Caco-2 (cell line): ENCODE measurements at regions of chr10 and their contacts with region 1.

Region 1: DNA sequence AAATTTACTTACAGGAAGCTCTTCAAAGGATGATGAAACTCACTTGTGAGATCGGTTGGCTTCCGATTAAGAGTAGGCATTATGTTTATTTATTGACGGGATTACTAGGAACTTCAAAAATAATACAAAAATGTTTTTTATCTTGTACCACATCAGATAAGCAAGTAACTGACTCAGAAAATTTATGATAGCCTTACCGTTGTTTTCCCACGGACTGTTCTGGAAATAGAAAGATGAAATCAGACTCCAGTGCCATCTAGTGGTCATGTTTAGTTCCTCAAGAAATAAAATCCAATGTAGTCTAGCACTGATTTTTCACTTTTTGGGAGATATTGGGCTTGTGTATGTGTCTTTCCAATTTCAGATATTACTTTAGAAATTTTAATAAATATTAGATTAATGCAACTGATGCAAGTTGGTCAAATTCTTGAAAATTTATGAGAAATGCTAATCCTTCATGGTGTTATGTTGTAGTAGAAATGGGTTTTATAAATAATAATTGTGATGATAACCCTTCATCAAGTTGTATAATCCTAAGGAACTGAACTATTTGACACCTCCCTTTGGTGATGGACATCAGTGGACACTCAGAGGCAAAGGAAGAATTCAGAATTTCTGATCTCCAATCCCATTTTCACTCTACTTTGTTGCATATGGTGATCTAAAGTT is 168.8 kb downstream of the TMEM26 start:
- DNase-seq: peak in 1 of 2 experiments; percentile 73
- H3K4me3 ChIP-seq: no peak overlapping the region
- H3K4me3 Mint-ChIP-seq: no peak overlapping the region
- H3K27ac Mint-ChIP-seq: no peak overlapping the region
- H3K4me1 ChIP-seq: peaks cover 5% of the 10 kb centered on the region; the same call in 1 of the 2 replicates
- H3K4me1 Mint-ChIP-seq: peaks cover 8% of the 10 kb centered on the region
- H3K27me3 ChIP-seq: no peaks in the 10 kb centered on the region
- H3K27me3 Mint-ChIP-seq: peaks cover 2% of the 10 kb centered on the region
- CTCF ChIP-seq: peak; percentile 84

Region 2: GRCh38 chr10:60883187-60883586 is 401.2 kb before region 1 on chr10:
- CTCF ChIA-PET with region 1: no interaction called
- POLR2A ChIA-PET with region 1: no interaction called
- intact Hi-C with region 1: loop called (anchors 1 kb)
- DNase-seq: peak; percentile 54 to 64
- H3K4me3 ChIP-seq: no peak overlapping the region
- H3K4me3 Mint-ChIP-seq: no peak overlapping the region
- H3K27ac Mint-ChIP-seq: no peak overlapping the region
- H3K4me1 ChIP-seq: no peaks in the 10 kb centered on the region
- H3K4me1 Mint-ChIP-seq: no peaks in the 10 kb centered on the region
- H3K27me3 ChIP-seq: no peaks in the 10 kb centered on the region
- H3K27me3 Mint-ChIP-seq: no peaks in the 10 kb centered on the region
- CTCF ChIP-seq: peak; percentile 72 to 88

Region 3: DNA sequence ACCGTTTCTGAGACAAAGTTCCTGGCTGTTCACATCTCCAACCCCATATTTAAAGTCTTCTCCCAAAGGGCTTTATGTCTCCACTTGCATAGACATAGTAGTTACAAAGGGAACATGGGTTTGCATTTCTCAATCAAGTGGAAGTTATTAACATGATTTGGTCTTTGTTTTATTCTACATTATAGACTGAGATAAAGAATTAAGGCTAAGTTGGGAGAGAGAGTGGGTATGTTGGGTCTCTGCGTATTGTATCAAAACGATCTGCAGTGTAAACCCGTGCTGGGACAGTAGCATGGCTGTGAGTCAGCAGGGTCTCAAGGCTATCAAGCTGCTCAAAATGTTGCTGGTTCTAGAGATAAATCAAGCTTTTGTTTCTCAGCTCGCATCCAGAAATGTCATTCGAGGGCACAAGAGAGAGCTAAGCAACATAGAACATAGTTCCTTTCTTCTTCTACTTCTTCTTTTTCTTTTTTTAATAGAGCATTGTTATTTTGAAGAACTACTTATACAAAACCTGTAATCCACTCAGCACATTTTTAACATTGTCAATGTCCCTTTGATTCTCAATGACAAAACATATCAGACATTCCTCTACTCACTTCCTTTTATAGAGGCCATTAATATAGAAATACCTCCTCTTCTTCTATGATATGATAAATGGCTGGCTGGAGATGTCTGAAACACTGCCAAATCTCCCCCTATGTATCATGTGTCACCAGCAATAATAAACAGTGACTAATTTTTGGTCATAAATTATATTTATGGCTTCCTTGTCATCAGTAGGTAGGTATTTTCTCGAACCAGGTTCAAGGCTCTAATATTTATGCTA is 305.9 kb before region 1 on chr10:
- CTCF ChIA-PET with region 1: no interaction called
- POLR2A ChIA-PET with region 1: no interaction called
- intact Hi-C with region 1: loop called (anchors 5 kb)
- DNase-seq: no peak
- H3K4me3 ChIP-seq: no peak overlapping the region
- H3K4me3 Mint-ChIP-seq: no peak overlapping the region
- H3K27ac Mint-ChIP-seq: no peak overlapping the region
- H3K4me1 ChIP-seq: peaks cover 14% of the 10 kb centered on the region
- H3K4me1 Mint-ChIP-seq: peaks cover 7% of the 10 kb centered on the region
- H3K27me3 ChIP-seq: no peaks in the 10 kb centered on the region
- H3K27me3 Mint-ChIP-seq: no peaks in the 10 kb centered on the region
- CTCF ChIP-seq: no peak

Region 4: GRCh38 chr10:61140765-61141392 is 143.5 kb before region 1 on chr10:
- CTCF ChIA-PET with region 1: interaction called, 3 read pairs
- POLR2A ChIA-PET with region 1: no interaction called
- intact Hi-C with region 1: loop called (anchors 1 kb)
- DNase-seq: peak in 1 of 2 experiments; percentile 64
- H3K4me3 ChIP-seq: no peak overlapping the region
- H3K4me3 Mint-ChIP-seq: no peak overlapping the region
- H3K27ac Mint-ChIP-seq: no peak overlapping the region
- H3K4me1 ChIP-seq: no peaks in the 10 kb centered on the region
- H3K4me1 Mint-ChIP-seq: no peaks in the 10 kb centered on the region
- H3K27me3 ChIP-seq: no peaks in the 10 kb centered on the region
- H3K27me3 Mint-ChIP-seq: peaks cover 15% of the 10 kb centered on the region
- CTCF ChIP-seq: peak; percentile 80 to 92

Region 5: DNA sequence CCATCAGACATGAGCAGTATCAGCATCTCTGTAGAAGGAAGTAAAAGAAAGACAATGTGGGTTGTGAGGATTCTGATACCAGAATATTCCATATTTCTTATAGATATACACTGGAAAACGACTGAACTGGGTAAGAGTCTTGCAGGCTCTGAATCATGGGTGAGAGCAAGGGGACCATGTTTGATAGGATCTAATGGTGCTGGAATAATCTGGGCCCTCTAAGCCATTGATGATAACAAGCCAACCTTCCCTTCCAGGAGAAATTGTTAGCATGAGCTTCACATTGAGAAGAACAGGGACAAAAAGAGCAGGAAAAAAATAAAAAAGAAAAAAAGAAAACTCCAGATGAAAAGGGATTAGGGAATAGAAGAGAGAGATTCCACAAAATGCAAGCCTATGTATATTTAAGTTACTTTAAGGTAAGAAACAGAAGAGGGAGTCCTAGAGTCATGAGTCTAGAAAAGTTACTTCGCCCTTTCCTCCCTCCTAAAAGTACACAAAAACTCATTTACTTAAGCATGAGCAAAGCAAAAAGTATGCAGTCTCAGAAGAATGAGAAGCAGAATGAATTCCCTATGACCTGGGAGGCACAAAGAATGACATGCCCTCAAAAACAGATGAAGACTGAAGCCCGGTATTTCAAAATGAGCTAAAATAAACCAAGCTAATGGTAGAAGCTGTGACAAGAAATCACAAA is 13.1 kb before region 1 on chr10:
- CTCF ChIA-PET with region 1: interaction called, 3 read pairs
- POLR2A ChIA-PET with region 1: no interaction called
- intact Hi-C with region 1: loop called (anchors 1 kb)
- DNase-seq: peak in 1 of 2 experiments; percentile 68
- H3K4me3 ChIP-seq: no peak overlapping the region
- H3K4me3 Mint-ChIP-seq: peak overlapping the region; percentile 51
- H3K27ac Mint-ChIP-seq: peak overlapping the region; percentile 19
- H3K4me1 ChIP-seq: peaks cover 17% of the 10 kb centered on the region
- H3K4me1 Mint-ChIP-seq: peaks cover 12% of the 10 kb centered on the region
- H3K27me3 ChIP-seq: no peaks in the 10 kb centered on the region
- H3K27me3 Mint-ChIP-seq: no peaks in the 10 kb centered on the region
- CTCF ChIP-seq: peak; percentile 55 to 62